Activated B cell treated with CpG ODN at 0.5 μM for 24 hours (primary cell): ENCODE measurements at regions of chr1 and their contacts with region 1.

Region 1: GRCh38 chr1:46303038-46303871 is at the starts of genes LRRC41 and UQCRH:
- DNase-seq: peak; percentile 89
- ATAC-seq: peak; percentile 82
- H3K4me3 Mint-ChIP-seq: peak within 1 kb of the TSS; percentile 99
- H3K27ac Mint-ChIP-seq: peak within 1 kb of the TSS; percentile 97
- H3K4me1 Mint-ChIP-seq: peaks cover 64% of the 10 kb centered on the region
- H3K27me3 Mint-ChIP-seq: no peaks in the 10 kb centered on the region
- CTCF ChIP-seq: no peak
- total RNA-seq, gene LRRC41: 59.5 and 60.2 TPM in 2 replicates
- total RNA-seq, gene UQCRH: 243 and 279 TPM in 2 replicates

Region 2: DNA sequence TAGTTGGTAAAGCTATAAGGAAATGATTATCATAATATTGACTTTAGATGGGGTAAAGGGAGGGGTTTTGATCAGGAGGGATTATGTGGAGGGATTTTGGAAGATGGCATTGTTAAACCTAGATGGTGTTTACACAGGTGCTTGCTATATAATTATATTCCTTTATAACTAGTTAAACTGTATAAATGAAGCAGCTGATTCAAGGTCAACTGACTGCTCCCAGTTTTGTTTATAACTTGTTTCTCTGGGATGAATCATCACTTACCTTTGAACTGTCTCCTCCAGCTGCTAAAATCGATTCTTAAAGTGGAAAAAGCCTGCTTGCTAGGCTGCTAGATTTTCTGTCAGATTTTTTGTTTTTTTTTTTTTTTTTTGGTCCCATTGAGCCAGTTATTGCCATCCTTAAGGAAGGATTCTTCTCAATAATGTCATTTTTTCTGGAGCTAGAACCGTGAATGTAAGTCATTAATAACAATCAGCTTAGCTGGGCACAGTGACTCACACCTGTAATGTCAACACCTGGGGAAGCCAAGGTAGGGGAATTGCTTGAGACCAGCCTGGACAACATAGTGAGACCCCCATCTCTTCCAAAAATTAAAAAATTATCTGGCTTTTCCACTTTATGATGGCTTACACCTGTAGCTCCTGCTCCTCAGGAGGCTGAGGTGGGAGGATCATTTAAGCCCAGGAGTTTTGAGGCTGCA is 324.0 kb before region 1 on chr1:
- CTCF ChIA-PET with region 1: no interaction called
- POLR2A ChIA-PET with region 1: no interaction called
- intact Hi-C with region 1: no loop called
- DNase-seq: no peak
- ATAC-seq: no peak
- H3K4me3 Mint-ChIP-seq: no peak overlapping the region
- H3K27ac Mint-ChIP-seq: no peak overlapping the region
- H3K4me1 Mint-ChIP-seq: no peaks in the 10 kb centered on the region
- H3K27me3 Mint-ChIP-seq: no peaks in the 10 kb centered on the region
- CTCF ChIP-seq: no peak

Region 3: GRCh38 chr1:46043458-46044017 is 259.7 kb before region 1 on chr1:
- CTCF ChIA-PET with region 1: no interaction called
- POLR2A ChIA-PET with region 1: no interaction called
- intact Hi-C with region 1: loop called (anchors 1 kb)
- DNase-seq: peak; percentile 36
- ATAC-seq: peak; percentile 100
- H3K4me3 Mint-ChIP-seq: peak overlapping the region; percentile 56
- H3K27ac Mint-ChIP-seq: peak overlapping the region; percentile 80
- H3K4me1 Mint-ChIP-seq: peaks cover 39% of the 10 kb centered on the region
- H3K27me3 Mint-ChIP-seq: no peaks in the 10 kb centered on the region
- CTCF ChIP-seq: no peak

Region 4: GRCh38 chr1:46333300-46334029 is 30.2 kb after region 1 on chr1:
- CTCF ChIA-PET with region 1: interaction called, 11 read pairs
- POLR2A ChIA-PET with region 1: interaction called, 19 read pairs
- intact Hi-C with region 1: loop called (anchors 2 kb)
- DNase-seq: no peak
- ATAC-seq: peak; percentile 40
- H3K4me3 Mint-ChIP-seq: peak overlapping the region; percentile 19
- H3K27ac Mint-ChIP-seq: peak overlapping the region; percentile 89
- H3K4me1 Mint-ChIP-seq: peaks cover 39% of the 10 kb centered on the region
- H3K27me3 Mint-ChIP-seq: no peaks in the 10 kb centered on the region
- CTCF ChIP-seq: no peak

Region 5: DNA sequence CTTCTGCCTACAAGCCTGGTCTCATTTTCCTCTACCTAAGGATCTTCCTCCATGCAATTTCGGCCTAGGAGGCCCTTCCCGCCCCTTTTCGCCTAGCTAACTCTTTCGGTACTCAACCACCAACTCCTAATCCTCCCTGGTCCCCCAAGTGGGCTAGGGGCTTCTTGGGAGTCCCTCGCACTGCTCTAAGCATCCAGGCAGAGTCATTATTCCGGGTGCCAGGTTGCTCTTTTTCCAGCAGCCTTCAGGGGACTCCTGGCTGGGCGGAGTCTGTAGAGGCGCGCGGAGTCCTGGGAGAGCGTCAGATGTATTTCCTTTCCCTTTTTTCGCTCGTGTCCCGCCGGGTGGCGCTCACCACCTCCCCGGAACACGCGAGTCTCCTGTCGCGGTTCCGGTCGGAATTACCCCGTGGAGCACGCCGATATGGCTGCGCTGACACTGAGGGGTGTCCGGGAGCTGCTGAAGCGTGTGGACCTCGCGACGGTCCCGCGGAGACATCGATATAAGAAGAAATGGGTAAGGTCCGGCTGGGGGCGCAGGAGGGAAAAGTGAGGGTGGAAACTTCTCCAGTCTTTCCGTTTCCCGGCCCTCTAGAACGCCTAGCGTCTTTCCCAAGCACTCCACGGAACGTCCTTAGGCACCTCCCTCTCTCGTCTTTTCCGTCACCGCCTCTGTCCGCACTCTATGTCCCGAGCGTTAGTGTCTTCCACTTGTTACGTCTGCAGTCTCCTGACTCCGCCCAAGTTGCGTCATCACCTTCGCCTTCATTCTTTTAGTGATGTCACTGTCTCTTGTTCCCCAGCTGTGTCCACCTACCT is 37.4 kb after region 1 on chr1 and contains the start of gene NSUN4:
- CTCF ChIA-PET with region 1: interaction called, 62 read pairs
- POLR2A ChIA-PET with region 1: interaction called, 66 read pairs
- intact Hi-C with region 1: loop called (anchors 1 kb)
- DNase-seq: peak; percentile 69
- ATAC-seq: peak; percentile 81
- H3K4me3 Mint-ChIP-seq: peak within 1 kb of the TSS; percentile 99
- H3K27ac Mint-ChIP-seq: peak within 1 kb of the TSS; percentile 98
- H3K4me1 Mint-ChIP-seq: peaks cover 33% of the 10 kb centered on the region
- H3K27me3 Mint-ChIP-seq: no peaks in the 10 kb centered on the region
- CTCF ChIP-seq: peak; percentile 50
- total RNA-seq, gene NSUN4: 35.3 and 38.6 TPM in 2 replicates

Region 6: DNA sequence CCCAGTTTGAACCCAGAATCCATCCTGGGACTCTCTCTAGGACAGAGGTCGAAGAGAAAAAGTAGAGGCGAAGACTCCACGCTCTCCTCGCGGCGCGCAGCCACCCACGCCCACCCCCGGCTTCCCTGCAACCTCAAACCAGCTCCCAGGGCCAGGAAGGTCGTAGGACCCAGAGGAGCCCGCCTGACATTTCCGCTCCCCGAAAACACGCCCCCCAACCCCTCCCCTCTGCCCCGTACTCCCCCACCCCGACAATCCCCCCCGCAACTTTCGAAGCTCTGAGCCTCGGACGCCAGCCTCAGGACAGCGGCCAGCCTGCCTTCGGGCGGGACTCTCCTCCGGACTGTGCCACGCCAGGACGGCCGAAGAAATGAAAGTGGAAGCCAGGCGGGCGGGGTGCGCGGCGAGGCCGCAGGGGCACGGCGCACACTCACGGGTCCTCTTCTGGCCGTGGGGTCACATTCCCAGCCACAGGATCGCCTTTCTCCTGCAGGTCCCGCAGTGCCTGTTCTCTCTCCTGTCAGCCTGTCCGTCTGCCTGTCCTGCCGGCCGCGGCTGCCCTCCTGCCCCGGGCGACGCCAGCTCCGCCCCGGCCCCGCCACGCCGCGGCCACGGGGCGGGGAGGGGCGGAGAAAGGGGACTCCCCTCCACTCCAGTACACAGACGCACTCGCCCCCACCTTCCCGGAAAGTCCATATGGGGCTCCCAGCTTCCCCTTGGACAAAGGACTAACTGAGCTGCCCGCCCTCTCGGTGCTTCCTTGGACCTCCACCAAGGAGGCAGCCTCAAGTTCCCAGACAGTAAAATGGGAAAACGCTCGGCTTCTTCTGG is 313.2 kb after region 1 on chr1 and contains the start of gene MOB3C:
- CTCF ChIA-PET with region 1: no interaction called
- POLR2A ChIA-PET with region 1: no interaction called
- intact Hi-C with region 1: loop called (anchors 10 kb)
- DNase-seq: peak; percentile 62
- ATAC-seq: peak; percentile 89
- H3K4me3 Mint-ChIP-seq: peak within 1 kb of the TSS; percentile 92
- H3K27ac Mint-ChIP-seq: peak within 1 kb of the TSS; percentile 87
- H3K4me1 Mint-ChIP-seq: peaks cover 64% of the 10 kb centered on the region
- H3K27me3 Mint-ChIP-seq: no peaks in the 10 kb centered on the region
- CTCF ChIP-seq: no peak
- total RNA-seq, gene MOB3C: 9.7 and 10.7 TPM in 2 replicates

Region 7: GRCh38 chr1:46718727-46719622 is 415.7 kb after region 1 on chr1 and contains the start of gene EFCAB14:
- CTCF ChIA-PET with region 1: no interaction called
- POLR2A ChIA-PET with region 1: no interaction called
- intact Hi-C with region 1: loop called (anchors 5 kb)
- DNase-seq: peak; percentile 100
- ATAC-seq: peak; percentile 99
- H3K4me3 Mint-ChIP-seq: peak within 1 kb of the TSS; percentile 89
- H3K27ac Mint-ChIP-seq: peak within 1 kb of the TSS; percentile 88
- H3K4me1 Mint-ChIP-seq: peaks cover 37% of the 10 kb centered on the region
- H3K27me3 Mint-ChIP-seq: peaks cover 2% of the 10 kb centered on the region
- CTCF ChIP-seq: no peak
- total RNA-seq, gene EFCAB14: 70.2 and 79.8 TPM in 2 replicates